ENCODE measurements at regions of chr7 and their contacts with region 1.

Region 1: GRCh38 chr7:86898171-86898570 is 161.3 kb downstream of the ELAPOR2 start:
- DNase-seq: no peak
- ATAC-seq: no peak
- H3K4me3 ChIP-seq: no peak overlapping the region
- H3K4me3 Mint-ChIP-seq: no peak overlapping the region
- H3K27ac ChIP-seq: no peak overlapping the region
- H3K27ac Mint-ChIP-seq: no peak overlapping the region
- H3K4me1 ChIP-seq: no peaks in the 10 kb centered on the region
- H3K4me1 Mint-ChIP-seq: peaks cover 0 to 5% (median 4%) of the 10 kb centered on the region in 3 donors
- H3K27me3 ChIP-seq: no peaks in the 10 kb centered on the region
- H3K27me3 Mint-ChIP-seq: no peaks in the 10 kb centered on the region

Region 2: GRCh38 chr7:86785641-86786040 is 112.5 kb before region 1 on chr7:
- CTCF ChIA-PET with region 1: no interaction called
- POLR2A ChIA-PET with region 1: no interaction called
- DNase-seq: no peak
- ATAC-seq: no peak
- H3K4me3 ChIP-seq: no peak overlapping the region
- H3K4me3 Mint-ChIP-seq: no peak overlapping the region
- H3K27ac ChIP-seq: no peak overlapping the region
- H3K27ac Mint-ChIP-seq: no peak overlapping the region
- H3K4me1 ChIP-seq: no peaks in the 10 kb centered on the region
- H3K4me1 Mint-ChIP-seq: no peaks in the 10 kb centered on the region
- H3K27me3 ChIP-seq: no peaks in the 10 kb centered on the region
- H3K27me3 Mint-ChIP-seq: no peaks in the 10 kb centered on the region

Region 3: GRCh38 chr7:86846494-86847190 is 51.5 kb before region 1 on chr7:
- CTCF ChIA-PET with region 1: no interaction called
- POLR2A ChIA-PET with region 1: interaction called in 1 of 2 experiments, 10 read pairs
- DNase-seq: no peak
- ATAC-seq: no peak
- H3K4me3 ChIP-seq: no peak overlapping the region
- H3K4me3 Mint-ChIP-seq: no peak overlapping the region
- H3K27ac ChIP-seq: no peak overlapping the region
- H3K27ac Mint-ChIP-seq: no peak overlapping the region
- H3K4me1 ChIP-seq: no peaks in the 10 kb centered on the region
- H3K4me1 Mint-ChIP-seq: no peaks in the 10 kb centered on the region
- H3K27me3 ChIP-seq: no peaks in the 10 kb centered on the region
- H3K27me3 Mint-ChIP-seq: no peaks in the 10 kb centered on the region

Measured in T-cell (primary cell).